IMR-90 (cell line): ENCODE measurements at regions of chr3 and their contacts with region 1.

Region 1: DNA sequence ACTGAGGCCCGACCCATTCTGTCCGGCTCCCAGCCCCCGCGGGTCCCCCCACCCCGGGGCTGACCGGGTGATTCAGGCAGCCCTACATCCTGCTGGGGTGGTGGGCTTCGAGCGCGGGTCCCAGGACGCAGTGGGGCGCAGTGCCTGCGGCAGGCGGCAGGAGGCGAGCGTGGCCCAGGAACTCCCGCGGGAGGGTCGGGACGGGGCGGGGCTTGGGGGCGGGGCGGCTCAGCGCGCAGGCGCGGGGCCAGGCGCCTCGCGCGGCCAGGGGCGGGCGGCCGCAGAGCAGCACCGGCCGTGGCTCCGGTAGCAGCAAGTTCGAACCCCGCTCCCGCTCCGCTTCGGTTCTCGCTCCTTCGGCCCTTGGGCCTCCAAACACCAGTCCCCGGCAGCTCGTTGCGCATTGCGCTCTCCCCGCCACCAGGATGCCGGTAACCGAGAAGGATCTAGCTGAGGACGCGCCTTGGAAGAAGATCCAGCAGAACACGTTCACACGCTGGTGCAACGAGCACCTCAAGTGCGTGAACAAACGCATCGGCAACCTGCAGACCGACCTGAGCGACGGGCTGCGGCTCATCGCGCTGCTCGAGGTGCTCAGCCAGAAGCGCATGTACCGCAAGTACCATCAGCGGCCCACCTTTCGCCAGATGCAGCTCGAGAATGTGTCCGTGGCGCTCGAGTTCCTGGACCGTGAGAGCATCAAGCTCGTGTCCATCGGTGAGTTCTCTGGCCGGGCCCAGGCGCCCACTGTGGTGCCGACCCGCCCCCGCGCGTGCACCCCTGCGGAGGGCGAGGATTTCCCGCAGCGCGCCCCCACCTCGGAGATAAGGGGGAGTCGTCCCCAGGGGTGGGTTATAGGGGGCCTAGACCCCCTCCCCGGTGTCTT is at the start of gene FLNB:
- DNase-seq: peak; percentile 54
- ATAC-seq: peak; percentile 82
- H3K4me3 ChIP-seq: peak within 1 kb of the TSS; percentile 95
- H3K27ac ChIP-seq: peak within 1 kb of the TSS; percentile 80
- H3K4me1 ChIP-seq: peaks cover 20% of the 10 kb centered on the region
- H3K27me3 ChIP-seq: no peaks in the 10 kb centered on the region
- CTCF ChIP-seq: peak; percentile 76
- POLR2A ChIP-seq: peak; percentile 89
- RAD21 ChIP-seq: peak; percentile 69
- total RNA-seq, gene FLNB: 124 and 136 TPM in 2 replicates

Region 2: GRCh38 chr3:57961828-57962447 is 46.4 kb before region 1 on chr3:
- CTCF ChIA-PET with region 1: interaction called, 3 read pairs
- POLR2A ChIA-PET with region 1: no interaction called
- dilution Hi-C with region 1: no loop called
- in situ Hi-C with region 1: no loop called
- intact Hi-C with region 1: loop called (anchors 5 kb)
- DNase-seq: peak; percentile 61
- ATAC-seq: peak; percentile 64
- H3K4me3 ChIP-seq: no peak overlapping the region
- H3K27ac ChIP-seq: no peak overlapping the region
- H3K4me1 ChIP-seq: peaks cover 2% of the 10 kb centered on the region; the same call in 1 of the 2 replicates
- H3K27me3 ChIP-seq: no peaks in the 10 kb centered on the region
- CTCF ChIP-seq: peak; percentile 66
- POLR2A ChIP-seq: no peak
- RAD21 ChIP-seq: peak; percentile 74

Region 3: DNA sequence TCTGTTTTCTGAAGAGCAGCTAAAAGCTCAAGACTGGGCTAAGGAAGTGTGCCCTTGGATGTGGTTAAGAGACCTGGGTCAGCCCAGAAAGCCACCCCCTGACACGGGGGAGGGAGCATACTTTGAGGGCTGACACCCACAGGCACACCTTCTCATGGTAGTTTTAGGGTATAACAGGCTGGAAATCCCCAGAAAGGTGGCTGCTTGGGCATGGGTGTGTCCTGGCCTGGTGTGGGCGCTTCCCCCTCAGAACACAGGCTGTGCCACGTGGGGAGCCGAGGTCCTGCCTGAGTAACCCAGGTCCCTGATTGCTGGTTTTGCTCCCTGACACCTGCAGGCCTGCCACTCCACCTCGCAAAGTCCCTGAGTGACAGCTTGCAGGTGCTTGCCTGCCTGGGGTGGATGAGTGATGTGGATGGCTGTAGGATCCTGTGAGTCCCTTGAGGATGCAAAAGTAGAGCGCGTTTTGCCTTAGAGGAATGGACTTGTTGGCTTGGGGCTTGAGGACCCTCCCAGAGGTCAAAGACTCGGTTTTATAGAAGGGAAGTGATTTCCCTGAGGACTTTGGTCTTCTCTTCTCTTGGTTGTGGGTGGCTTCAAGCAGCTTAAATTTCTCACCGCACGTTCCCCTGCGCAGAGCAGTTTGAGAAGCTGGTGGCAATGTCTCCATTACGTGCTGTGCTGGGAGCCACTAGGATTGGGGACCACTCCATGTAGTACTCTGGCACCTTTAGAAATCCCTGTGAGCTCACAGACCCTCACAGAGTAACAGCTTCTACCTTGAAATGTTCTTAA is 108.0 kb after region 1 on chr3:
- CTCF ChIA-PET with region 1: interaction called, 4 read pairs
- POLR2A ChIA-PET with region 1: no interaction called
- dilution Hi-C with region 1: no loop called
- in situ Hi-C with region 1: no loop called
- intact Hi-C with region 1: loop called (anchors 2 kb)
- DNase-seq: no peak
- ATAC-seq: no peak
- H3K4me3 ChIP-seq: no peak overlapping the region
- H3K27ac ChIP-seq: peak overlapping the region; percentile 5; the same call in 1 of the 2 replicates
- H3K4me1 ChIP-seq: peaks cover 17% of the 10 kb centered on the region
- H3K27me3 ChIP-seq: no peaks in the 10 kb centered on the region
- CTCF ChIP-seq: no peak
- POLR2A ChIP-seq: no peak
- RAD21 ChIP-seq: no peak

Region 4: GRCh38 chr3:58144478-58145325 is 136.3 kb after region 1 on chr3:
- CTCF ChIA-PET with region 1: no interaction called
- POLR2A ChIA-PET with region 1: no interaction called
- dilution Hi-C with region 1: no loop called
- in situ Hi-C with region 1: no loop called
- intact Hi-C with region 1: no loop called
- DNase-seq: no peak
- ATAC-seq: no peak
- H3K4me3 ChIP-seq: no peak overlapping the region
- H3K27ac ChIP-seq: no peak overlapping the region
- H3K4me1 ChIP-seq: peaks cover 2% of the 10 kb centered on the region; the same call in 1 of the 2 replicates
- H3K27me3 ChIP-seq: no peaks in the 10 kb centered on the region
- CTCF ChIP-seq: no peak
- POLR2A ChIP-seq: no peak
- RAD21 ChIP-seq: no peak

Region 5: GRCh38 chr3:58177747-58178527 is 169.6 kb after region 1 on chr3:
- CTCF ChIA-PET with region 1: interaction called, 3 read pairs
- POLR2A ChIA-PET with region 1: no interaction called
- dilution Hi-C with region 1: no loop called
- in situ Hi-C with region 1: no loop called
- intact Hi-C with region 1: loop called (anchors 2 kb)
- DNase-seq: peak; percentile 69
- ATAC-seq: peak; percentile 92
- H3K4me3 ChIP-seq: peak overlapping the region; percentile 24
- H3K27ac ChIP-seq: no peak overlapping the region
- H3K4me1 ChIP-seq: peaks cover 7% of the 10 kb centered on the region
- H3K27me3 ChIP-seq: peaks cover 8% of the 10 kb centered on the region; the same call in 1 of the 2 replicates
- CTCF ChIP-seq: peak; percentile 87
- POLR2A ChIP-seq: no peak
- RAD21 ChIP-seq: peak; percentile 71

Region 6: GRCh38 chr3:58299839-58300516 is 291.6 kb after region 1 on chr3:
- CTCF ChIA-PET with region 1: no interaction called
- POLR2A ChIA-PET with region 1: no interaction called
- dilution Hi-C with region 1: no loop called
- in situ Hi-C with region 1: loop called (anchors 10 kb)
- intact Hi-C with region 1: loop called (anchors 5 kb)
- DNase-seq: peak; percentile 73
- ATAC-seq: peak; percentile 72
- H3K4me3 ChIP-seq: no peak overlapping the region
- H3K27ac ChIP-seq: no peak overlapping the region
- H3K4me1 ChIP-seq: no peaks in the 10 kb centered on the region
- H3K27me3 ChIP-seq: peaks cover 20% of the 10 kb centered on the region
- CTCF ChIP-seq: peak; percentile 85
- POLR2A ChIP-seq: peak; percentile 43; the same call in 1 of the 2 replicates
- RAD21 ChIP-seq: peak; percentile 82

Region 7: GRCh38 chr3:58383904-58384303 is 375.5 kb after region 1 on chr3:
- CTCF ChIA-PET with region 1: no interaction called
- POLR2A ChIA-PET with region 1: no interaction called
- dilution Hi-C with region 1: no loop called
- in situ Hi-C with region 1: no loop called
- intact Hi-C with region 1: no loop called
- DNase-seq: peak; percentile 99
- ATAC-seq: peak; percentile 74
- H3K4me3 ChIP-seq: no peak overlapping the region
- H3K27ac ChIP-seq: peak overlapping the region; percentile 97
- H3K4me1 ChIP-seq: peaks cover 36% of the 10 kb centered on the region
- H3K27me3 ChIP-seq: no peaks in the 10 kb centered on the region
- CTCF ChIP-seq: no peak
- POLR2A ChIP-seq: no peak
- RAD21 ChIP-seq: no peak; the same call in 1 of the 2 replicates